Lower lobe of right lung (tissue), 2 donors: ENCODE measurements at regions of chr1 and their contacts with region 1.

Region 1: DNA sequence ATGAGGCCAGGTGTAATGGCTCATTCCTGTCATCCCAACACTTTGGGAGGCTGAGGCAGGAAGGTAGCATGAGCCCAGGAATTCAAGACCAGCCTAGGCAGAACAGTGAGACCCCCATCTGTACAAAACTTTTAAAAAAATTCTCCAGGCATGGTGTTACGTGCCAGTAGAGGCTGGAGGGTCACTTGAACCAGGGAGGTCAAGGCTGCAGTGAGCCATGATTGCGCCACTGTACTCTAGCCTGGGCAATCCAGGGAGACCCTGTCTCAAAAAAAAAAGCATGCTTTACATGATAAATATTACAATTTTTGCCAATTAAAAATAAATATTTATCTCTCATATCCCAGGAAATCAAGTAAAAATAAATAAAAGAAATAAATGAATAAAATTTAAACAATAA is 17.6 kb upstream of the VPS45 start:
- DNase-seq: no peak
- ATAC-seq: no peak
- H3K4me3 ChIP-seq: no peak overlapping the region
- H3K27ac ChIP-seq: no peak overlapping the region
- H3K4me1 ChIP-seq: no peaks in the 10 kb centered on the region
- H3K27me3 ChIP-seq: no peaks in the 10 kb centered on the region
- CTCF ChIP-seq: no peak

Region 2: GRCh38 chr1:149962123-149962548 is 87.8 kb before region 1 on chr1:
- intact Hi-C with region 1: loop called (anchors 5 kb)
- DNase-seq: peak; percentile 54
- ATAC-seq: peak; percentile 92 to 93
- H3K4me3 ChIP-seq: peak overlapping the region; percentile 4
- H3K27ac ChIP-seq: peak overlapping the region; percentile 57
- H3K4me1 ChIP-seq: peaks cover 26% of the 10 kb centered on the region
- H3K27me3 ChIP-seq: no peaks in the 10 kb centered on the region
- CTCF ChIP-seq: peak; percentile 81